SK-N-SH (cell line): ENCODE measurements at regions of chr2 and their contacts with region 1.

Region 1: DNA sequence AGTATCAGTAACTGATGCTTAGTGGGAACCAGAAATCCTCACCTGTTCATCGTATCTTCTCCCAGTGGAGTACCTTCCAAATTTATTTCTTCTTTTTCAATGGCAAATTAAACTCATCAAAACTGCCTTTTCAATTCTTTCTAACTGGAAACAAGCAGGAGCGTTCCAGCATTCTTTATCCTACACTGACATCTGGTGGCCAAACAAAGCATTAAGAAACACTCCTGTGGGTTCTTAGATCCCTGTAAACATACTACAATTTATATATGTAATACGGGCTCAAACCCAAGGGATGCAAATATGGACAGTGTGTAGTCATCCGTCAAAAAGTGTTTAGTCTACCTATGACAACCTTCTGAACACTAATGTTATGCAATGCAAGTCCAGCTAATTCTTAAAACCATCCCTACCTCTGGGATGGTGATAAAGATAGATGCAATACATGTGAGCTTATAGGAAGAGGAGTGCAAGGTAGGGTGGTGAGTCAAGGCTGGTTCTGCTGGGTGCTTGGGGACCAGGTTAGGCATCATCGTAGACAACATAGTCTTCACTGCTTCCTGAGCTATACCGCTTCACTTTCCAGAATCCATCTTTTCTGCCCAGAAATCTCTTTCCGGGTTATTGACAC is 375.0 kb downstream of the CTNNA2 start:
- DNase-seq: peak; percentile 54
- H3K4me3 ChIP-seq: no peak overlapping the region; a peak in 1 of 4 replicates
- H3K27ac ChIP-seq: no peak overlapping the region
- H3K4me1 ChIP-seq: no peaks in the 10 kb centered on the region; a peak in 1 of 4 replicates
- H3K27me3 ChIP-seq: no peaks in the 10 kb centered on the region
- CTCF ChIP-seq: peak; percentile 79
- EP300 ChIP-seq: no peak
- RAD21 ChIP-seq: peak; percentile 95

Region 2: DNA sequence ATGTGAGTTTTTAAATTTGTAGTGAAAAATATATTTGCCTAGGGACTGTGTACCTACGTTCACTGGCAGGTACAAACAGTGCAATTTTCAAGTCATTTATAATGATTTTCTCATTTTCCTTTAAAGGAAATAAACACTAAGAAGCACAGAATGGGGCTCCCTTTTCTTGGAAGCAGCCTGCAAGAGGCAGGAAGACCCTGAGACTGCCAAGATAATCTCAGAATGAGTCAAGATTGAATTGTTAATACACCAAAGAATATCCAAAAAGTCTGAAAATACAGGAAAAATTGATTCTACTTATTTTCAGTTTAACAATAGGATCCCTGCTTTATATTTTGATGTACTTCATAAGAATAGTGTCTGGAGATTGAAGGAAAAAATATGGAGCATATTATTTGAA is 43.9 kb before region 1 on chr2:
- CTCF ChIA-PET with region 1: no interaction called
- POLR2A ChIA-PET with region 1: no interaction called
- DNase-seq: no peak
- H3K4me3 ChIP-seq: no peak overlapping the region
- H3K27ac ChIP-seq: no peak overlapping the region
- H3K4me1 ChIP-seq: no peaks in the 10 kb centered on the region; a peak in 2 of 4 replicates
- H3K27me3 ChIP-seq: no peaks in the 10 kb centered on the region
- CTCF ChIP-seq: no peak
- EP300 ChIP-seq: no peak
- RAD21 ChIP-seq: no peak

Region 3: DNA sequence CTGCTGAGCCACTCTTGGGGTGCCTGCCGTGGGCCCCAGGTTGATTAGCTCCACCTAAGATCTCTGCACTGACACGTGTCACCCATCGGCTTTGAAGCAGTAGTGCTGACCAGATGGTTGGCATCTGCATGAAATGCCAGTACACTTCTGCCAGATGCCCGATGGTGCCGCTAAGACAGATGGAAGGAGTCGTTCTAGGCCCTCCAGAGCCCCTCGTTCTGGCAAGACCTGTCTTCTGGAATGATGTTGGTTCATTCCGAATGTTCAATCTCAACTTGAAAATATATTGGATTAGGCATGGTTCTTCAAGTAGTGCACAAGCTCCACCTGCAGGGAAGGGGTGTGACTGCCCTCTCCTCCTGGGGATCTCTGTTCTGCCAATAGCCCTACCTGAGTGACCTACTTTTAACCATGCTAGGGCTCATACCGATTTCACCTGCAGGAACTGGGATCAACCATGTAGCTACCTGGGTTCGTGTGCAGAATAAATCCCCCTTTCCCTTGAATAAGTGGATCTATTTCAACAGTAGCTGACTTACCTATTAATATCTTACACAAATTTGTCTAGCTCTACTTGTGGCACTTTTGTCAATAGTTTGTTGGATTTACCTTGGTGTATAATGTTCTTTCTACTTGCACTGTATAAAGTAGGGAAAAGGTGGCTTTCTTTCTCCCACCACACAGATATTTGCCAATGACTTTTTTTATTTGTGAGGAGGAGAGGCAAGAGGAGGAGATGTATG is 32.4 kb before region 1 on chr2:
- CTCF ChIA-PET with region 1: interaction called, 18 read pairs
- POLR2A ChIA-PET with region 1: no interaction called
- DNase-seq: peak; percentile 59
- H3K4me3 ChIP-seq: no peak overlapping the region
- H3K27ac ChIP-seq: no peak overlapping the region
- H3K4me1 ChIP-seq: peaks cover 0 to 8% of the 10 kb centered on the region in 2 experiments; a peak in 2 of 4 replicates
- H3K27me3 ChIP-seq: no peaks in the 10 kb centered on the region
- CTCF ChIP-seq: peak; percentile 38
- EP300 ChIP-seq: no peak
- RAD21 ChIP-seq: peak; percentile 68

Region 4: DNA sequence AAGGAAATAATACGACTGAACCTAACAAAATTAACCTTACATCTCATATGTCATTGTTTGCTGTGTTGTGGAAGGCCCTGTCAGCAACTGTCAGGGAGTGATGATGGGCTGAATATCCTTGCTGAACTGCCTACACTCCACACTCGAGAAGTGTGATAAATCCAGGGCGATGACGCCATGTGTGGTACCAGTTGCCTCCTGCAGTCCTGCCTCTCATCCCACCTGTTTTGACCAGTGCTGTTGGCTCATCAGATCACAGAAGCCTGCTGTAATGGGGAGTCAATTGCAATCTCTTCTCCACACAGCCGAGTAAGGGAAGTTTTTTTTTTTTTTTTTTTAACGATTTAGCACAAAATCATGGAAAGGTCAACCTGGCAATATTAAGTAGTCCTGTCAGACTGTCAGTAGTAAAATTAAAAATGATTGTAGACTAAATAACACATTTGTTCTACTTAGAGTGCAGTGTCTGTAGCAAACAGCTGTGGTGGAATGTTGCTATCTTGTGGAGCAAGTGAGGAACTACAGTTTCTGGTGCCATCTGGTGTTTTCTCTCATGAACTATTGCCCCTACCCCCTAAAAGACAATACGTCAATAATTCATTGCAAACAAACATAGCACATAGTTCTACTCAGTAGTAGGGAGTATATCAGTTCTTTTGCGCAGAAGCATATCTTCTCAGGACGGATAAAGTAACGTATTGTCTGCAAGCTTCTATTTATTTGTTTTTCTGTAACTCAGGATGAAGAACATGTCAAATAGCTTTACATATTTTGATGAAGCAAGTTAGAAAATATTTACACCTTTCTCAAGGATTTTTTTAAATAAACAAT is 27.4 kb before region 1 on chr2:
- CTCF ChIA-PET with region 1: interaction called, 18 read pairs
- POLR2A ChIA-PET with region 1: no interaction called
- DNase-seq: peak; percentile 63
- H3K4me3 ChIP-seq: no peak overlapping the region
- H3K27ac ChIP-seq: no peak overlapping the region
- H3K4me1 ChIP-seq: peaks cover 0 to 2% of the 10 kb centered on the region in 2 experiments; a peak in 1 of 4 replicates
- H3K27me3 ChIP-seq: no peaks in the 10 kb centered on the region
- CTCF ChIP-seq: peak; percentile 59
- EP300 ChIP-seq: no peak
- RAD21 ChIP-seq: peak; percentile 90